Posterior vena cava (tissue), 2 donors: ENCODE measurements at regions of chr7 and their contacts with region 1.

Region 1: GRCh38 chr7:3033581-3033980 is 10.1 kb downstream of the CARD11 start:
- DNase-seq: no peak

Region 2: DNA sequence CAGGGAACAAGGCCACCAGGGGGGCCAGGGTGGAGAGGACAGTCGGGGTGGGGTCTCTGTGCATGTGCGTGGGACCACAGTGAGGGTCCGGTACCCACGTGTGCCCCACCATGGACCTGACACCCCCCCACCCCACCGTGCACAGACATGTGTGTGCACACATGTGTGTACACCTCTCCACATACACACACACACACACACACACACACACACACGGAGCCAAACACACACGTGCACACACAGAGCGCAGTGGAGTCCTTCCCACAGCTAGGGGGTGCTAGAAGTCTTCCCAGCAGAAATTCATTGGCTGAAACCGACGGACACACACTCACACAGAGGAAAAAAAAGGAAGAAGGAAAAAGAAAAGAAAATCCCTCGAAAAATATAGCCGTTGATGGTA is 146.7 kb before region 1 on chr7:
- intact Hi-C with region 1: no loop called
- DNase-seq: no peak

Region 3: GRCh38 chr7:3021825-3022224 is 11.8 kb before region 1 on chr7:
- intact Hi-C with region 1: loop called in 1 of 2 experiments (anchors 1 kb)
- DNase-seq: no peak